GM12878 (cell line): ENCODE measurements at regions of chr1 and their contacts with region 1.

Region 1: DNA sequence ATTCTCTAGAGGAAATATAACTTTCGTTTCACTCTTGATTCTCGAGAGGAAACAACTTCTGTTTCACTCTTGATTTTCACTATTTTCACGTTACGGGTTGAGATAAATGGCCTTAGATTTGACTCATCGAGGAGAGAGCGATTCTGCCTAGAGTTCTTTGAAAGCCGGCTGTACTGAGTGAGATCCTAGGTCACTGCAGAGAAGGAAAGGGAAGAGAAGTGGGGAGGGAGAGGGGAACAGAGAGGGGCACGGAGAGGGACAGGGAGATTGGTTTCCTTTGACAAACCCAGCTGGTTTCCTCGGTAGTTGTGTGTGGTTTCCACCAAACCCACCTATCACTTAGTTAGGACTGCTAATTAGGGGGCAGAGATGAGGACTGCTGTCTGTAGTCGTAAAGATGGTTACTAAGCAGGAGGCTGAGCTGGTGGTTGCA is 21.6 kb upstream of the GPR137B start:
- DNase-seq: peak; percentile 48
- ATAC-seq: peak; percentile 73
- H3K4me3 ChIP-seq: 0 out of 2 replicates have a peak overlapping the region, but pooled peaks have one; percentile 13
- H3K27ac ChIP-seq: peak overlapping the region; percentile 51
- H3K4me1 ChIP-seq: peaks cover 34% of the 10 kb centered on the region
- H3K27me3 ChIP-seq: no peaks in the 10 kb centered on the region
- CTCF ChIP-seq: no peak
- EP300 ChIP-seq: peak in 1 of 2 experiments; percentile 29; a peak in 1 of 4 replicates
- POLR2A ChIP-seq: no peak
- RAD21 ChIP-seq: no peak

Region 2: DNA sequence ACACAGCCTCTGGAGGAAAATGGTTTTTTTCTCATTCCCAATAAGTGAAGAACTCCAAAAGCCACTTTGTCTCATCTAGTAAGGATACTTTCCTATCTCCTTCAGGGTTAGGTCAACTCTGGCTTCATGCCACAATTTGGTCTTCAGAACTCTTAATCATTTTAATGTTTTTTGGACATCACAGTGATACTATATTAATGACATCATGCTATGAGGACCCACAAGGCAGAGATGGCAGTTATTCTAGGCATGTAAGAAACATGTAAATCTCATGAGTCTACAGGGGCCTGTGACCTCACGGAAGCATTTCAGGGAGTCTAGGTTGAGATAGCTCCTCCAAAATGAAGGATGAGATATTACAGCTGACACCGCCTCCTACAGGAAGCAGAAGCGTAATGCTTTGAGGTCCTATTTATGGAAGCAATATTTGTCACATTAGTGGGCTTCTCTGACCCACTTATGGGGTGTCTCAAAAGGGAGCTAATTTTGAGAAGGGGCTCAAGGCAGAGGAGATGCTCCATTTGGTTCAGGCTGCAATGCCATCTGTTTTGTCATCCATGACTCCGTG is 16.6 kb after region 1 on chr1:
- CTCF ChIA-PET with region 1: interaction called, 11 read pairs
- POLR2A ChIA-PET with region 1: interaction called, 6 read pairs
- RAD21 ChIA-PET with region 1: interaction called, 4 read pairs
- SMC1A ChIA-PET with region 1: interaction called, 10 read pairs
- in situ Hi-C with region 1: no loop called
- intact Hi-C with region 1: loop called (anchors 2 kb)
- DNase-seq: no peak
- ATAC-seq: peak; percentile 10; the same call in 2 of the 3 replicates
- H3K4me3 ChIP-seq: no peak overlapping the region
- H3K27ac ChIP-seq: no peak overlapping the region
- H3K4me1 ChIP-seq: peaks cover 11% of the 10 kb centered on the region
- H3K27me3 ChIP-seq: peaks cover 1 to 13% of the 10 kb centered on the region in 2 experiments
- CTCF ChIP-seq: peak; percentile 25 to 47 (median 29); a peak in 3 of 6 replicates
- EP300 ChIP-seq: no peak
- POLR2A ChIP-seq: no peak
- RAD21 ChIP-seq: peak; percentile 62

Region 3: DNA sequence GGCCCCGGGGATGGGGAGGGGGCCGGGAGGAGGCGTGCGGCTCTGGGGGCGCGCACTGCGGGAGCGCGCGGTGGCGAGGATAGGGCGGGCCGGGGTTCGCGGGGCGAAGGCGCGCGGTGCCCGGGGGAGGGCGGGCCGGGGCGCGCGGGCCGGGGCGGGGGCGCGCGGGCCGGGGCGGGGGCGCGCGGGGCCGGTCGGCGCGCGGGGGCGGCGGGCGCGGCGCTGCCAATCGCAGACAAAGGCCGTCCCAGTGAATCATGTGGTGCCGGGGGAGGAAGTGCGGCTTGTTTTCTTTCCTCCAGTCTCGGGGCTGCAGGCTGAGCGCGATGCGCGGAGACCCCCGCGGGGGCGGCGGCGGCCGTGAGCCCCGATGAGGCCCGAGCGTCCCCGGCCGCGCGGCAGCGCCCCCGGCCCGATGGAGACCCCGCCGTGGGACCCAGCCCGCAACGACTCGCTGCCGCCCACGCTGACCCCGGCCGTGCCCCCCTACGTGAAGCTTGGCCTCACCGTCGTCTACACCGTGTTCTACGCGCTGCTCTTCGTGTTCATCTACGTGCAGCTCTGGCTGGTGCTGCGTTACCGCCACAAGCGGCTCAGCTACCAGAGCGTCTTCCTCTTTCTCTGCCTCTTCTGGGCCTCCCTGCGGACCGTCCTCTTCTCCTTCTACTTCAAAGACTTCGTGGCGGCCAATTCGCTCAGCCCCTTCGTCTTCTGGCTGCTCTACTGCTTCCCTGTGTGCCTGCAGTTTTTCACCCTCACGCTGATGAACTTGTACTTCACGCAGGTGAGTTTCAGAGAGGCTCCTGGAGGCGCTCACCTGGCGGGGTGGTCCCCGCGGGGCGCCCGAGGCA is 21.7 kb after region 1 on chr1 and contains the start of gene GPR137B:
- CTCF ChIA-PET with region 1: interaction called, 11 read pairs
- POLR2A ChIA-PET with region 1: interaction called, 8 read pairs
- RAD21 ChIA-PET with region 1: interaction called, 9 read pairs
- SMC1A ChIA-PET with region 1: interaction called, 12 read pairs
- in situ Hi-C with region 1: no loop called
- intact Hi-C with region 1: loop called (anchors 2 kb)
- DNase-seq: no peak
- ATAC-seq: peak; percentile 61
- H3K4me3 ChIP-seq: peak within 1 kb of the TSS; percentile 84
- H3K27ac ChIP-seq: peak within 1 kb of the TSS; percentile 62
- H3K4me1 ChIP-seq: peaks cover 17% of the 10 kb centered on the region
- H3K27me3 ChIP-seq: peaks cover 1 to 13% of the 10 kb centered on the region in 2 experiments
- CTCF ChIP-seq: no peak
- EP300 ChIP-seq: no peak
- POLR2A ChIP-seq: peak; percentile 63
- RAD21 ChIP-seq: no peak
- polyA plus RNA-seq, gene GPR137B: 5.4 to 6.4 TPM

Region 4: DNA sequence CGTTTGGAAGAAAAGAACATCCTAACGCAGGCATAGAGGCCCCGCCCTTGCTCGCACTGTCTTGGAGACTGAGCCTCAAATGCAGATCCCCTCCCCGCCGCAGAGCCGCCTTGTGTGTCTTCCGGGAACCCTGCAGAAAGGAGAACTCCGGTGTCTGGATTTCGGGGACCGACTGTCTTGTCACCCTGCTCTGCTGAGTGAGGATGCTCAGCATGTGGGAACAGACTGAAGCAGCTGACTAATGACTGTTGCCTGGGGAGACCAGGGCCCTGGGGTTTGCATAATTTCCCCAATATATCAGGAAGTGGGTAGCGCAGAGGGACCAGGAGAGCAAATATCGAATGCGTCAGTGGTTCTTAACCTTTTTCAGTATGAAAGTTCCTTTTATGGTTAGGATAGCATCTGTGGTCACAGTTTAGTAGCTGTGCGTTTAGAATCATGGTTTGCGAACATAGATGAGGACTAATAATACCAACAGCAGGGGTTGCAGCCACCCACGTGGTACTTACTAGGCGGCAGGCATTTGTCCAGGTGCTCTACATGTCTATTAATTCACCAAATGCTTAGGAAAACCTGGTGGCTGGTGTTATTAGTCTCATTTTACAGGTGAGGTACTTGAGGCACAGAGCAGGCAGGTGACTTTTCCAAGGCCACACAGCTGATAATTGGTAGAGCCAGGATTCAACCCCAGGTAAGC is 35.9 kb after region 1 on chr1:
- CTCF ChIA-PET with region 1: interaction called, 5 read pairs
- POLR2A ChIA-PET with region 1: interaction called, 6 read pairs
- RAD21 ChIA-PET with region 1: interaction called, 22 read pairs
- SMC1A ChIA-PET with region 1: interaction called, 22 read pairs
- in situ Hi-C with region 1: no loop called
- intact Hi-C with region 1: loop called (anchors 1 kb)
- DNase-seq: peak; percentile 99
- ATAC-seq: peak; percentile 74
- H3K4me3 ChIP-seq: peak overlapping the region; percentile 46; the same call in 1 of the 2 replicates
- H3K27ac ChIP-seq: peak overlapping the region; percentile 99
- H3K4me1 ChIP-seq: peaks cover 61% of the 10 kb centered on the region
- H3K27me3 ChIP-seq: no peaks in the 10 kb centered on the region
- CTCF ChIP-seq: no peak
- EP300 ChIP-seq: peak; percentile 100
- POLR2A ChIP-seq: peak; percentile 67; the same call in 1 of the 2 replicates
- RAD21 ChIP-seq: 0 out of 2 replicates have a peak, but pooled peaks have one; percentile 4

Region 5: DNA sequence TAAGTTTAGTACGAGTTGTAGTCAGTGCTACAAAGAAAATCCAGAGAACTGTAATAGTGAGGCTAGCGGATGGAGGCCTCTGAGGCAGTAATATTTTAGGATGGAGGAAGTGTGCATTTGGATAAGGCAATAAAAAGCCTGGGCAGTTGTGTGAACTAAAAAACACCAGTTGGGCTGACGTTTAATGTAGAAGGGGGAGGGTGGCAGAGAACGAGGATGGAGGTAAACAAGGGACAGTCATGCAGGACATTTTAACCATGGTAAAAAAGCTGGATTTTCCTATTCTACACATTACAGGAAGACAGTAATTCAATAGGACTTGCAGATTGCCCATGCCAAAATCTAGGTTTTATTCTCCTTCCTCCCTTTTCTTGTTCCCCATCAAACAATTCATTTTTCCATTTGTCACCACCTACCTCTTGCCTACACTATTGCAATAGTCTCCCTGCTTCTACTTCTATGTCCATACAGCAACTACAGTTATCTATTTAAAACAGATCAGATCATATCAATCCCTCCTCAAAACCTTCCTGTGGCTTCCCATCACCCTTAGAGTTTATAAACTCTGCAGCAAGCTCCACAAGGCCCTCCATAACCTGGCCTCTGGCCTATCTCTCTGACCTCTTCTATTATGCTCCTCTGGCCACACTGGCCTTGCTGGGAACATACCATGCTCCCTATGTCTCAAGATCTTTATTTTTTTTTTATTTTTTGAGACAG is 133.3 kb after region 1 on chr1:
- CTCF ChIA-PET with region 1: no interaction called
- POLR2A ChIA-PET with region 1: no interaction called
- RAD21 ChIA-PET with region 1: no interaction called
- SMC1A ChIA-PET with region 1: no interaction called
- in situ Hi-C with region 1: no loop called
- intact Hi-C with region 1: no loop called
- DNase-seq: no peak
- ATAC-seq: peak; percentile 35
- H3K4me3 ChIP-seq: no peak overlapping the region
- H3K27ac ChIP-seq: no peak overlapping the region
- H3K4me1 ChIP-seq: no peaks in the 10 kb centered on the region
- H3K27me3 ChIP-seq: no peaks in the 10 kb centered on the region
- CTCF ChIP-seq: no peak
- EP300 ChIP-seq: no peak
- POLR2A ChIP-seq: no peak
- RAD21 ChIP-seq: no peak